Activated CD8-positive, alpha-beta memory T cell treated with anti-CD3 and anti-CD28 coated beads, Interleukin-2, amount 10 ng/mL, durations not matched to agents 7 days and 5 days (primary cell): ENCODE measurements at regions of chr20 and their contacts with region 1.

Region 1: GRCh38 chr20:50929299-50930138 is 1.7 kb downstream of the ADNP start:
- DNase-seq: peak; percentile 98
- ATAC-seq: peak; percentile 71
- H3K4me3 Mint-ChIP-seq: peak overlapping the region; percentile 95
- H3K27ac Mint-ChIP-seq: peak overlapping the region; percentile 95
- H3K4me1 Mint-ChIP-seq: peaks cover 53% of the 10 kb centered on the region
- H3K27me3 Mint-ChIP-seq: no peaks in the 10 kb centered on the region

Region 2: GRCh38 chr20:50815162-50815989 is 114.1 kb before region 1 on chr20:
- CTCF ChIA-PET with region 1: interaction called, 83 read pairs
- DNase-seq: no peak
- ATAC-seq: peak; percentile 13
- H3K4me3 Mint-ChIP-seq: peak overlapping the region; percentile 71
- H3K27ac Mint-ChIP-seq: peak overlapping the region; percentile 85
- H3K4me1 Mint-ChIP-seq: peaks cover 64% of the 10 kb centered on the region
- H3K27me3 Mint-ChIP-seq: no peaks in the 10 kb centered on the region

Region 3: GRCh38 chr20:50821994-50822393 is 107.5 kb before region 1 on chr20:
- CTCF ChIA-PET with region 1: interaction called, 83 read pairs
- DNase-seq: peak; percentile 67
- ATAC-seq: peak; percentile 17
- H3K4me3 Mint-ChIP-seq: no peak overlapping the region
- H3K27ac Mint-ChIP-seq: peak overlapping the region; percentile 82
- H3K4me1 Mint-ChIP-seq: peaks cover 63% of the 10 kb centered on the region
- H3K27me3 Mint-ChIP-seq: no peaks in the 10 kb centered on the region

Region 4: GRCh38 chr20:50844430-50845100 is 85.0 kb before region 1 on chr20:
- CTCF ChIA-PET with region 1: interaction called, 33 read pairs
- DNase-seq: peak; percentile 95
- ATAC-seq: peak; percentile 99
- H3K4me3 Mint-ChIP-seq: no peak overlapping the region
- H3K27ac Mint-ChIP-seq: peak overlapping the region; percentile 98
- H3K4me1 Mint-ChIP-seq: peaks cover 78% of the 10 kb centered on the region
- H3K27me3 Mint-ChIP-seq: no peaks in the 10 kb centered on the region

Region 5: DNA sequence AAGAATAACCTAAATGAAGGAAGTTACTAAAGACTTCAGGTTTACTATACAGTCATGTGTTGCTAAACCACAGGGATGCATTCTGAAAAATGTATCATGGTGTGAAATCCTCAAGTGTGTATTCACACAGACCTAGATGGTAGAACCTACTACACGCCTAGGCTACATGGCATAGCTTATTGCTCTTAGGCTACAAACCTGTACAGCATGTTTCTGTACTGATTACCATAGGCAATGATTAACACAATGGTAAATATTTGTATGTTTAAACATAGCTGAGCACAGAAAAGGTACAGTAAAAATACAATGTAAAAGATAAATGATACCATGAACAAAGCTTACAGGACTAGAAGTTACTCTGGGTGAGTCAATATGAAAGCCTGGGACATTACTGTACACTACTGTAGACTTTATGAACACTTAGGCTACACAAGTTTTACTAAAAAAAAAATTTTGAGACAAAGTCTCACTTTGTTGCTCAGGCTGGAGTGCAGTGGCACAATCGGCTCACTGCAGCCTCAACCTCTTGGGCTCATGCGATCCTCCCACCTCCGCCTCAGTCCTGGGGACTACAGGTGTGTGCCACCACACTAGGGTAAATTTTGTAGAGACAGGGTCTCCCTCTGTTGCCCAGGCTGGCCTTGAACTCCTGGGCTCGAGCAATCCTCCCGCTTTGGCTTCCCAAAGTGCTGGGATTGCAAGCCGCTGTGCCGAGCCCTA is 34.2 kb before region 1 on chr20:
- CTCF ChIA-PET with region 1: interaction called, 15 read pairs
- DNase-seq: no peak
- ATAC-seq: no peak
- H3K4me3 Mint-ChIP-seq: no peak overlapping the region
- H3K27ac Mint-ChIP-seq: no peak overlapping the region
- H3K4me1 Mint-ChIP-seq: peaks cover 49% of the 10 kb centered on the region
- H3K27me3 Mint-ChIP-seq: no peaks in the 10 kb centered on the region

Region 6: GRCh38 chr20:50913690-50914375 is 15.7 kb before region 1 on chr20:
- CTCF ChIA-PET with region 1: interaction called, 34 read pairs
- DNase-seq: peak; percentile 60
- ATAC-seq: peak; percentile 92
- H3K4me3 Mint-ChIP-seq: no peak overlapping the region
- H3K27ac Mint-ChIP-seq: peak overlapping the region; percentile 66
- H3K4me1 Mint-ChIP-seq: peaks cover 74% of the 10 kb centered on the region
- H3K27me3 Mint-ChIP-seq: no peaks in the 10 kb centered on the region

Region 7: GRCh38 chr20:50958615-50959542 is 29.4 kb after region 1 on chr20 and contains the start of gene MOCS3:
- CTCF ChIA-PET with region 1: interaction called, 53 read pairs
- DNase-seq: peak; percentile 91
- ATAC-seq: peak; percentile 79
- H3K4me3 Mint-ChIP-seq: peak within 1 kb of the TSS; percentile 93
- H3K27ac Mint-ChIP-seq: peak within 1 kb of the TSS; percentile 98
- H3K4me1 Mint-ChIP-seq: peaks cover 58% of the 10 kb centered on the region
- H3K27me3 Mint-ChIP-seq: no peaks in the 10 kb centered on the region
- total RNA-seq, gene MOCS3: 4.6 to 6.1 TPM